ENCODE measurements at regions of chr4 and their contacts with region 1.

Region 1: DNA sequence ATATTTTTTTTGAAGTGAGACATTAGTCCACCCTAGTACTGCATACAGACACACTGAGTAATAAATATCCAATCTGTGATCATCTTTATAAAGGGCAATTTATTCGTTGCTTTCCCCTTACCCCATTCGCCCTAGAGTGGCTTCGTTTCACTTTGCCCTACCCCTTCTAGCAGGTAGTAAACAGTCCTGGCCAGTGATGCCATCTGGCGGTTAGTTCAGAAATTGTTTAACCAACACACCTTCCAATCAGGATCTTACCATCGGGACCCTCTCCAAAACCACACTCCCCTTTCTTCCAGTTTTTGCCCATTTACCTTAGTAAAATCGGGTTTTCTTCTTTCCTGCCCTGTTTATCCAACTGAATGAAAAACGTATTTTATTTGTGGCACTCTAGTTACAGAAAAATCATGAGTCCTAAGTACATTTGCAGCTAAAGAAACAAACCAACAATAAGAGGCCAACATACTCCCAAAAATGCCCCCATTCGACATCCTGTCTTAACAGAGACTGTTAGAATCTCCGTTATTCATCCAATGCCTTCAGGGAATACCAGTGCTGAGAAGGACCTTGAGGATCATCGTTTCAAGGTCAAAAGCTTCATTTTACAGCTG is 2.2 kb downstream of the PPA2 start:
- DNase-seq: peak; percentile 57
- H3K4me3 Mint-ChIP-seq: peak overlapping the region; percentile 98
- H3K27ac Mint-ChIP-seq: peak overlapping the region; percentile 57
- H3K4me1 Mint-ChIP-seq: peaks cover 41% of the 10 kb centered on the region
- H3K27me3 Mint-ChIP-seq: peaks cover 11% of the 10 kb centered on the region

Region 2: DNA sequence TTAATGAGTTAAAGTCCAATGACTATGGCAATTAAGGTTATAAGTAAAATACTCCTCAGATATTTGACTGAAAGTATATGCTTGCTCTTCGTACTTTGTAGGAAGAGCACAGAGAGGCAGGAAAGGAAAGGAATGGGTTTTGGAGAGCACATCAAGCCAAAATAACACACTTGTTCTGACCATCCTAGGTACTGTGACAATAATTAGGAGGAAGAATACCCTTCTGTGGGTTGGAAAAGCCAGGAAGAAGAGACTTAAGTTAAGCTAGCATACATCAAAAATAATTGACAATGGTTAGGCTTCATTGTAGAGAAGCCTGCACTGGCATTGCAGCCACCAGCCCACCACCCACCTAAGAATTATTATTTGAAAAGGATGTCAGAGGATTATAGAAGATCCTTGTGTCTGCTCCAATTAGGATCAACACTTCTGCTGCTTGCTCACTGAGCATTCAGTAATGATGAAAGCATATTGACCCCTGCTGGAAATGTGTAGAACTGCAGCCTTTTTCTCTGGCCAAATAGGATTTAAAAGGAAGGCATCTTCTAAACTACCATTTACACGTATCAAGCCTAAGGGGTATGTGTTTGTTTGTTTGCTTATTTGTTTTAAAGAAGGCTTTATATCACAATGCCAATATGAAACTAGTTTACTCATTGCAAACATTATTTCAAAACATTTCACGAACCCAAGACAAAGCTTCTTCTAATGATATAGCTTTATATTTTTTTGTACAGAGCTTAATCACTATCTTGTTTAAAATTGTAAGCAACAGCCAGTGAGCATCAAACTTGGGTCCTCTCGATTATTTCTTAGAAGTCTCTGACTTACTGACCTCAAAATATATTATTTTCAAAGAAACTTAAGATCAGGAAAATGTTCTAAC is 611.2 kb before region 1 on chr4:
- intact Hi-C with region 1: loop called (anchors 10 kb)
- DNase-seq: no peak
- H3K4me3 Mint-ChIP-seq: no peak overlapping the region
- H3K27ac Mint-ChIP-seq: no peak overlapping the region
- H3K4me1 Mint-ChIP-seq: no peaks in the 10 kb centered on the region
- H3K27me3 Mint-ChIP-seq: peaks cover 13% of the 10 kb centered on the region

Region 3: DNA sequence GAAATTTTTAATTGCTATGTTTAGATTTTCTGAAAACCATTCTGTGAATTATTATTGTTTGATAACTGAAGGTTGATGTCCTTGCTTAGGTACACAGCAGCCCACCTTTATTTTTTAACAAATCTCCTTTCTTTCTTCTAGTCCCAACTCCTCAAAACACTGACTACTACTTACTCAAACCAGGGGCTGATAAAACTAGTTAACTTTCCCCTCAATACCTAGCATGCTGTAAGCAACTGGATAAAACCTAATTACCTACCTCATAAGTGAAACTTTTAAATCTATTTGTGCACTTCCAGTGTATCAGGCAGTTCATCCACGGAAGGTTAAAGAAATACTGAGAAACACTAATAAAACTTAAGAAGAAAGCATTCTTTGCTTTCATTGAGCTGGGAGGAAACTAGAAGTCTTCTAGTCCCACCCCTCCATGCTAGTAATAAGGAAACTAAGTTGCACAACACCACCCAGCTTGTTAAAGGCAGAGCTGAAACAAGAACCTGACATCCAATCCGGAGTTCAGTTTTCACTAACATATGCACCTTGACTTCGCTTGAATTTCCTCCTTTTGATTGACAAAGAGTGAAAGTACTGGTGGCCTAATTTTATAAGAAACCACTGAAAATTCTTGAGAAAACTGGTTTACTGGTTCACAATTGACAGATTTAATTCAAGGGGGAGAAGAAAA is 505.2 kb before region 1 on chr4:
- intact Hi-C with region 1: loop called (anchors 2 kb)
- DNase-seq: peak; percentile 43
- H3K4me3 Mint-ChIP-seq: peak overlapping the region; percentile 66
- H3K27ac Mint-ChIP-seq: peak overlapping the region; percentile 86
- H3K4me1 Mint-ChIP-seq: peaks cover 39% of the 10 kb centered on the region
- H3K27me3 Mint-ChIP-seq: peaks cover 4% of the 10 kb centered on the region

Region 4: GRCh38 chr4:105215609-105216313 is 255.9 kb before region 1 on chr4:
- intact Hi-C with region 1: loop called (anchors 1 kb)
- DNase-seq: no peak
- H3K4me3 Mint-ChIP-seq: no peak overlapping the region
- H3K27ac Mint-ChIP-seq: peak overlapping the region; percentile 63
- H3K4me1 Mint-ChIP-seq: peaks cover 25% of the 10 kb centered on the region
- H3K27me3 Mint-ChIP-seq: no peaks in the 10 kb centered on the region

Region 5: GRCh38 chr4:105453550-105454205 is 18.0 kb before region 1 on chr4:
- intact Hi-C with region 1: loop called (anchors 2 kb)
- DNase-seq: no peak
- H3K4me3 Mint-ChIP-seq: no peak overlapping the region
- H3K27ac Mint-ChIP-seq: peak overlapping the region; percentile 57
- H3K4me1 Mint-ChIP-seq: peaks cover 22% of the 10 kb centered on the region
- H3K27me3 Mint-ChIP-seq: no peaks in the 10 kb centered on the region